Activated T-helper 1 cell treated with anti-CD3 and anti-CD28 coated beads, Interleukin-12 subunit alpha, Interleukin-12 subunit beta, Interleukin-2, Interleukin-4 antibody, amounts not matched to agents 30 ng/mL and 10 ng/mL and 1 ng/mL, durations not matched to agents 14 hours and 24 hours and 36 hours (primary cell): ENCODE measurements at regions of chr7 and their contacts with region 1.

Region 1: GRCh38 chr7:139230774-139231512 is at the start of gene UBN2:
- DNase-seq: peak; percentile 89
- H3K4me3 Mint-ChIP-seq: peak within 1 kb of the TSS; percentile 100
- H3K27ac Mint-ChIP-seq: peak within 1 kb of the TSS; percentile 97
- H3K4me1 Mint-ChIP-seq: peaks cover 32% of the 10 kb centered on the region
- H3K27me3 Mint-ChIP-seq: peaks cover 27% of the 10 kb centered on the region
- total RNA-seq, gene UBN2: 14.7 and 15.6 TPM in 2 replicates

Region 2: GRCh38 chr7:139109188-139109982 is 121.6 kb before region 1 on chr7 and contains the start of gene ZC3HAV1:
- intact Hi-C with region 1: loop called (anchors 1 kb)
- DNase-seq: peak; percentile 87
- H3K4me3 Mint-ChIP-seq: peak within 1 kb of the TSS; percentile 97
- H3K27ac Mint-ChIP-seq: peak within 1 kb of the TSS; percentile 98
- H3K4me1 Mint-ChIP-seq: peaks cover 38% of the 10 kb centered on the region
- H3K27me3 Mint-ChIP-seq: no peaks in the 10 kb centered on the region
- total RNA-seq, gene ZC3HAV1: 89.7 and 90.0 TPM in 2 replicates